BJ (cell line): ENCODE measurements at regions of chr1 and their contacts with region 1.

Region 1: GRCh38 chr1:24391882-24392603 is 21.5 kb downstream of the STPG1 start:
- DNase-seq: no peak
- H3K4me3 ChIP-seq: no peak overlapping the region
- H3K27me3 ChIP-seq: no peaks in the 10 kb centered on the region
- CTCF ChIP-seq: peak; percentile 84

Region 2: GRCh38 chr1:24186993-24187805 is 204.8 kb before region 1 on chr1 and contains the start of gene IFNLR1:
- CTCF ChIA-PET with region 1: interaction called, 59 read pairs
- POLR2A ChIA-PET with region 1: interaction called, 3 read pairs
- DNase-seq: no peak
- H3K4me3 ChIP-seq: peak within 1 kb of the TSS; percentile 30
- H3K27me3 ChIP-seq: peaks cover 6% of the 10 kb centered on the region; the same call in 1 of the 2 replicates
- CTCF ChIP-seq: no peak
- polyA plus RNA-seq, gene IFNLR1: not detected in 2 replicates

Region 3: GRCh38 chr1:24294757-24295371 is 97.2 kb before region 1 on chr1:
- CTCF ChIA-PET with region 1: interaction called, 19 read pairs
- POLR2A ChIA-PET with region 1: no interaction called
- DNase-seq: peak; percentile 61
- H3K4me3 ChIP-seq: no peak overlapping the region
- H3K27me3 ChIP-seq: peaks cover 23% of the 10 kb centered on the region
- CTCF ChIP-seq: peak; percentile 18; the same call in 1 of the 2 replicates

Region 4: DNA sequence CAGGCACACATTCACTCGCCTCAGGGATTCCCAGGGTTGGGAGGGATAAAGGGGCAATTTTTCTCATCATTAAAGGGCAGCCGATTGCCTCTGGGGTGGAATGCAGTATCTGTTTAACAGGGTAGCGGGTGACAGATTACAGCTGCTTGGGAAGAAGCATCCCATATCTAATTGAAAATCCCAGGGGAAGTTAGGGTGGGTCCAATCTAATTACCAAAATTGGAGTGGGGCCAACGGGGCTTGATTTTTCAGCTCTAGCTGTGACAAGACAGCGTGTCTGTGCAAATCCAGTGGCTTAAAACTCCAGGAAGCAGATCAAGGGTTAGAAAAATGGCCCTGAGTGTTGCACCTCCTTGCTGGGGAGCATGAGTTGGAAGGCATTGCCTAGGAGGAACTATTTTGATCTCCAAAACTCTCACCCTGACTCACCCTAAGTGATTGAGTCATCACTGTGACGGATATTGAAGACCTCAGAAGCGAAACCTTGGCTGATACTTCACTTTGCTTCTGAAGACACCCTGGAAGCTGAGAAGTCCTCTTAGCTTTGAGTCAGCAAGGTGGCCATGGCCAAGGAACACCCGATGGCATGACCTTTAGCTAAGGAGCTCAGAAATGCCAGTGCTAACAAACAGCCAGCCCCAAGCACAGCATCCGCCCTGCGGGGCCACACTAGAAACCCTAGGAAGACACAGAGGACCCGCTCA is 26.9 kb before region 1 on chr1:
- CTCF ChIA-PET with region 1: interaction called, 16 read pairs
- POLR2A ChIA-PET with region 1: no interaction called
- DNase-seq: peak; percentile 61
- H3K4me3 ChIP-seq: no peak overlapping the region
- H3K27me3 ChIP-seq: no peaks in the 10 kb centered on the region; the same call in 1 of the 2 replicates
- CTCF ChIP-seq: no peak

Region 5: DNA sequence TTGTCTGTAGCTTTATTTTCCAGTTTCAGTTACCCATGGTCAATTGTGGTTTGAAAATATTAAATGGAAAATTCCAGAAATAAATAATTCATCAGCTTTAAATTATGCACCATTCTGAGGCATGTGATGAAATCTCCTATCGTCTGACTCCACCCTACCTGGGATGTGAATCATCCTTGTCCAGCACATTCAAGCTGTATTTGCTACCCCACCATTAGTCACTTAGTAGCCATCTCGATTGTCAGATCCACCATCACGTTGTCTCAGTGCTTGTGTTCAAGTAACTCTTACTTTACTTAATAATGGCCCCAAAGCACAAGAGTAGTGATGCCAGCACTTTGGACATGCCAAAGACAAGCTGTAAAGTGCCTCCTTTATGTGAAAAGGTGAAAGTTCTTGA is 17.5 kb after region 1 on chr1:
- CTCF ChIA-PET with region 1: interaction called, 26 read pairs
- POLR2A ChIA-PET with region 1: interaction called, 4 read pairs
- DNase-seq: peak; percentile 69
- H3K4me3 ChIP-seq: no peak overlapping the region
- H3K27me3 ChIP-seq: no peaks in the 10 kb centered on the region
- CTCF ChIP-seq: no peak

Region 6: GRCh38 chr1:24513706-24514105 is 121.7 kb after region 1 on chr1:
- CTCF ChIA-PET with region 1: no interaction called
- POLR2A ChIA-PET with region 1: no interaction called
- DNase-seq: no peak
- H3K4me3 ChIP-seq: no peak overlapping the region
- H3K27me3 ChIP-seq: no peaks in the 10 kb centered on the region
- CTCF ChIP-seq: no peak

Region 7: DNA sequence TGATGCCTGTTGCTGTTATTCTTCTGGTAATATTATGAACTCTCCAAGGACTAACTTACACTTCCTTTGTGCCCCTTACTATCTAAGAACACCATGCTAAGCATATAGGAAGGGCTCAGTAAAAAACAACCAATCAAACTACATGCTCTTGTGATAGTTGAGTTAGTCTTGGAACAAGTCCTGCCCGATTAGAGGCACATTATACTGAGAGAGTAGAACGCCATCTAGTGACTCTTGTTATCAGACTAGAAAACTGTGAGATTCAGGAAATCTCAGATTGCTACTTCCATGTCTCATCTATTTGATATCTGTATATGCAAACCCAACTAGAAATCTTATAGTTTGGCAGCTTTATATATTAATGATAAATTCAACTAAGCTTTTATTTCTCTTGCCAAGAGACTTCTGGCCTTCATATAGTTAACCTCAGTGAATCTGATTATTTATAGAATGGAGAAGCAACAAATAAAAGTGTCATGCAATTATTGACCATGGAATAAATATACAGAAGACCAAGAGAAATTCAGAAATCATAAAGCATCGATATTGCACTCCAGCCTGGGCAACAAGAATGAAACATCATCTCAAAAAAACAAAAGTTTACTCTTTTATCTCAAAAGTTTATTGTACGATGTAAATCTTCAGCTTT is 243.3 kb after region 1 on chr1:
- CTCF ChIA-PET with region 1: interaction called, 28 read pairs
- POLR2A ChIA-PET with region 1: no interaction called
- DNase-seq: peak; percentile 26
- H3K4me3 ChIP-seq: no peak overlapping the region
- H3K27me3 ChIP-seq: no peaks in the 10 kb centered on the region
- CTCF ChIP-seq: peak; percentile 73